A673 (cell line): ENCODE measurements at regions of chr1 and their contacts with region 1.

Region 1: DNA sequence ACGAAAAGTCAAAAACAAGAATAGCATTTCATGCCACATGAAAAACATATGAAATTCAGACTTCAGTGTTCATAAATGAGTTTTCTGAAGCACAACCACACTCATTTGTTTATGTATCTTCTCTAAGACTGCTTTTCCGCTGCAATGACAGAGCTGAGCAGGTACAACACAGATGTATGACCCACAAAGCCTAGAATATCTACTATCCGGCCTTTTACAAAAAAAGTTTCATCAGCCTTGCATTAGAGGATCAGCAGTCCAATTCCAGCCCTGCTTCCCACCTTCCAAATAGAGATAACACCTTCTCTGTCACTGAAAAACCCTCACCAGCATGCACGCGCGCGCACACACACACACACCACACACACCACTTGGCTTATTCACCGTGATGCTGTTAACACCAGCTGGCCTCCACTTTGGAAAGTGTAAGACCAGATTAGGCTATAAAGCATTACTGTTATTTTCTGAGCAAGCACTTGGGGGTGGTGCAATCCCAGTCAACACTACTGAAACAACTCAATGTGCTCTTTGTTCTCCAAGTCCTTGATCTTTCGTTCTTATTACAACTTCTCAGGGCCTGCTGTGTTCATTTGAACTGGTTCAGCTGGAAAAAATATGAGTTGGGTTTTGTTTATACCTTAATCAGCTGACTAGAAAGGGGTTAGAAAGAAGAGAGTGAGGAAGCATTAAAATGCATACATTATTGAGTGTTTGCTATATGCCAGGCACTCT is 90.0 kb downstream of the GLUL start:
- DNase-seq: peak; percentile 30
- H3K4me3 ChIP-seq: no peak overlapping the region
- H3K27ac ChIP-seq: no peak overlapping the region
- H3K4me1 ChIP-seq: peaks cover 11% of the 10 kb centered on the region
- H3K27me3 ChIP-seq: no peaks in the 10 kb centered on the region
- CTCF ChIP-seq: no peak

Region 2: GRCh38 chr1:182357913-182358312 is 56.3 kb after region 1 on chr1:
- CTCF ChIA-PET with region 1: no interaction called
- POLR2A ChIA-PET with region 1: no interaction called
- intact Hi-C with region 1: no loop called
- DNase-seq: no peak
- H3K4me3 ChIP-seq: no peak overlapping the region
- H3K27ac ChIP-seq: no peak overlapping the region
- H3K4me1 ChIP-seq: no peaks in the 10 kb centered on the region
- H3K27me3 ChIP-seq: peaks cover 11% of the 10 kb centered on the region
- CTCF ChIP-seq: no peak

Region 3: GRCh38 chr1:182391362-182392044 is 89.9 kb after region 1 on chr1 and contains the start of gene GLUL:
- CTCF ChIA-PET with region 1: no interaction called
- POLR2A ChIA-PET with region 1: no interaction called
- intact Hi-C with region 1: loop called (anchors 5 kb)
- DNase-seq: peak; percentile 96
- H3K4me3 ChIP-seq: peak within 1 kb of the TSS; percentile 98
- H3K27ac ChIP-seq: peak within 1 kb of the TSS; percentile 95
- H3K4me1 ChIP-seq: peaks cover 5% of the 10 kb centered on the region
- H3K27me3 ChIP-seq: no peaks in the 10 kb centered on the region
- CTCF ChIP-seq: no peak
- total RNA-seq, gene GLUL: 260 and 266 TPM in 2 replicates